A549 (cell line): ENCODE measurements at regions of chr19 and their contacts with region 1.

Region 1: DNA sequence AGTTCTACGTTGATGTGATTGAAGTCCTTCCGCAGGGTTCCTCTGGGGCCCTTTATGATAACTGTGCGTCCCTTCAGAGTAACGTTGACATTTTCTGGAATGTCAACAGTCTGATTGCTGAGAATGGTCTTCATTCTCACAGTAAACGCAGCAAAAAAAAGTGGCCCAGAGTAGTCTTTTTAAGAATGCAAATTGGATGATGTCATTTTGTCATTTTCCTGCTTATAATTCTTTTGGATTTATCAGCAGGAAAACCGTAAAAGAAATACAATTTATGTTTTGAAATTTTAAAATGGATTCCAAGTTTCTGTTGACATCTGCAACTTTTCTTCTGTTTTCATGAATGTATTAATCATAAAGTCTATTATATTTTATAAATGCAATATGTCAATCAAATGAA is 14.8 kb downstream of the URI1 start:
- DNase-seq: no peak
- ATAC-seq: no peak
- H3K4me3 ChIP-seq: no peak overlapping the region
- H3K27ac ChIP-seq: no peak overlapping the region
- H3K4me1 ChIP-seq: peaks cover 12% of the 10 kb centered on the region; the same call in 2 of the 3 replicates
- CTCF ChIP-seq: no peak
- EP300 ChIP-seq: no peak
- POLR2A ChIP-seq: no peak
- RAD21 ChIP-seq: no peak

Region 2: DNA sequence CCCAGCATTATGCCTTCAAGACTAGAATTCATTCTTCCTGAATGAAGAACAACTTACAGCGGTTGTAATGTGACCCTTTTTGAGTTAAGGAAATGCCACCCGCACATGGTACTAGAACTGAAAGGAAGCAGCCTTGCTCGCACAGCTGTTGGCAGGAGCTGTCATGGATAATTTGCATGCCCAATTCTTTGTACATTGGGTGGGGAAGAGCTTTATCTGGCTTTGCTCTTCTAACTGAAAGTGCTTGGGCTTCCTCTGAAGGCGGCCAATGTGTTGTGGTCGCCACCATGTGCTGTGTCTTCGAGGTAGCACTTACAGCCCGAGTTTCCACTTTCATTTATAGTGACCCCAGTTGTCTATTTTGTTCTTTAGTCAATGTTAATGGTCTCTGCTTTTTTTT is 141.6 kb before region 1 on chr19:
- CTCF ChIA-PET with region 1: no interaction called
- POLR2A ChIA-PET with region 1: no interaction called
- DNase-seq: no peak
- ATAC-seq: no peak
- H3K4me3 ChIP-seq: no peak overlapping the region
- H3K27ac ChIP-seq: no peak overlapping the region
- H3K4me1 ChIP-seq: peaks cover 13% of the 10 kb centered on the region
- CTCF ChIP-seq: no peak
- EP300 ChIP-seq: no peak
- POLR2A ChIP-seq: no peak
- RAD21 ChIP-seq: no peak

Region 3: DNA sequence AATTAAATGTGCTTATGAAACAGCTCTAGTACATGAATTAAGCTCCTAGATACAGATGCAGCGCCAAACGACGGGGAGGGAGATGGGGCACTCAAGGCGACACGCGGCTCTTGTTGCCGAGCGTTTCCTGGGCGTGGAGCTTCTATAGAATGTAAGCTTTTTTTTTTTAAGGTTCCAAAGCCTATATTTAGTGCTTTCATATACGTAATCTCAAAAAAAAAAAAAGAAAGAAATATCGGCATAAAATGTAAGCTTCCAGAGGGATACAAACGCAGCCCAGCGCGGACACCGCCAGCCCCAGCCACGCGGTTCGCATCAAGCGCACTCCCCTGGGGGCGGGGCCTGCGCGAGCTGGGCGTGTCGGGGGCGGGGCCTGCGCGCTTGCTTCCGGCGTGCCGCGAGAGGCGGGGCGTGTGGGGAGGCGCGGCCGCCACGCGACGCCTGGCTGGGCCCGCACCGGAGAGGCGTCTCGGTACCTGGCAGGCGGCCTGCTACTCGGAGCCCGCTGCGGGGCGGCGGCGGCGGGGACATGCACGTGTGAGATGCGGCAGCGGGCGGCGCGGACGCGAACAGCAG is 14.9 kb before region 1 on chr19 and contains the start of gene URI1:
- CTCF ChIA-PET with region 1: interaction called, 10 read pairs
- POLR2A ChIA-PET with region 1: no interaction called
- DNase-seq: peak; percentile 92 to 96
- ATAC-seq: peak; percentile 89 to 90
- H3K4me3 ChIP-seq: peak within 1 kb of the TSS; percentile 64
- H3K27ac ChIP-seq: peak within 1 kb of the TSS; percentile 79 to 90
- H3K4me1 ChIP-seq: peaks cover 38% of the 10 kb centered on the region
- CTCF ChIP-seq: no peak
- EP300 ChIP-seq: no peak
- POLR2A ChIP-seq: peak; percentile 90
- RAD21 ChIP-seq: no peak
- polyA plus RNA-seq, gene URI1: 157 and 228 TPM in 2 replicates